ENCODE measurements at regions of chr16 and their contacts with region 1.

Region 1: DNA sequence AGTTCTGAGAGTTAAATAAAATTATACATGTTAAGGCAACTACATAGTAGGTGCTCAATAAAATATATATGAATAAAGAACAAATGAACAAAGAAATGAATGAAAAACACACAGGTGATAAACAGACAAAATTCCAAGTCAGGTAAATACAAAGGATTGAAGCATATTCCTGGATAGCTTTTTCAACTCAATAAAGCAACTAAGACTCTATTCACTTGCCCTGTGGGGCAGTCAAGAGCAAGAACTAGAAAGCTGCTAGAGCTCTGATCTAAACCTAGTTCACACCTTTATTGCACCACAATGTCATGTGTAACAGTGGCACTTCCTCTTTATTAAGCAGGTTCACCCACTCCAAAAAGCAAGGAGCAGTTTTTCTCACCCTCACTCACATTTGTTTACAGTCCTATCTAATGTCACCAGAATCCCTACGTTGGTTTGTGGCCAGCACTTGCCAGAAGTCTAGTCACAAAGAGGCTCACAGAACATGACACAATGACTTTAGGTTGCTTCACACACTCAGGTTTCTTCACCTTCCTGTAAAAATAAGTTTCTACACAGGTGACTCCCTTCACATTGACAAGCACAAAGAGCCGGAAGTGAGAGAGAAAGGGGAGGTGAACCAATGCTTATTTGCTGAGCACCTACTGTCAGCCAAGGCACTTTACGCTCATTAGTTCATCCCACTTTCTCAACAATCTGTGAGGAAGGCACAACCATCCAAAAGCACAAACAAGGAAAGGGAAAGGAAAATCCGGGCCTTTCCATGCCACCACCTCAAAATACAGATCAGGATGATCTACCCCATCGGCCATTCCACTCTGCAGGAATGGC is 70.8 kb downstream of the XPO6 start:
- DNase-seq: peak; percentile 76
- H3K4me3 Mint-ChIP-seq: peak overlapping the region; percentile 71
- H3K27ac Mint-ChIP-seq: peak overlapping the region; percentile 90
- H3K4me1 Mint-ChIP-seq: peaks cover 79% of the 10 kb centered on the region
- H3K27me3 Mint-ChIP-seq: no peaks in the 10 kb centered on the region

Region 2: GRCh38 chr16:28166394-28167208 is 25.6 kb after region 1 on chr16:
- intact Hi-C with region 1: loop called (anchors 1 kb)
- DNase-seq: no peak
- H3K4me3 Mint-ChIP-seq: peak overlapping the region; percentile 1
- H3K27ac Mint-ChIP-seq: peak overlapping the region; percentile 32
- H3K4me1 Mint-ChIP-seq: peaks cover 68% of the 10 kb centered on the region
- H3K27me3 Mint-ChIP-seq: no peaks in the 10 kb centered on the region

Region 3: GRCh38 chr16:28187595-28188004 is 46.6 kb after region 1 on chr16:
- intact Hi-C with region 1: loop called (anchors 1 kb)
- DNase-seq: no peak
- H3K4me3 Mint-ChIP-seq: peak overlapping the region; percentile 54
- H3K27ac Mint-ChIP-seq: peak overlapping the region; percentile 88
- H3K4me1 Mint-ChIP-seq: peaks cover 93% of the 10 kb centered on the region
- H3K27me3 Mint-ChIP-seq: no peaks in the 10 kb centered on the region

Region 4: DNA sequence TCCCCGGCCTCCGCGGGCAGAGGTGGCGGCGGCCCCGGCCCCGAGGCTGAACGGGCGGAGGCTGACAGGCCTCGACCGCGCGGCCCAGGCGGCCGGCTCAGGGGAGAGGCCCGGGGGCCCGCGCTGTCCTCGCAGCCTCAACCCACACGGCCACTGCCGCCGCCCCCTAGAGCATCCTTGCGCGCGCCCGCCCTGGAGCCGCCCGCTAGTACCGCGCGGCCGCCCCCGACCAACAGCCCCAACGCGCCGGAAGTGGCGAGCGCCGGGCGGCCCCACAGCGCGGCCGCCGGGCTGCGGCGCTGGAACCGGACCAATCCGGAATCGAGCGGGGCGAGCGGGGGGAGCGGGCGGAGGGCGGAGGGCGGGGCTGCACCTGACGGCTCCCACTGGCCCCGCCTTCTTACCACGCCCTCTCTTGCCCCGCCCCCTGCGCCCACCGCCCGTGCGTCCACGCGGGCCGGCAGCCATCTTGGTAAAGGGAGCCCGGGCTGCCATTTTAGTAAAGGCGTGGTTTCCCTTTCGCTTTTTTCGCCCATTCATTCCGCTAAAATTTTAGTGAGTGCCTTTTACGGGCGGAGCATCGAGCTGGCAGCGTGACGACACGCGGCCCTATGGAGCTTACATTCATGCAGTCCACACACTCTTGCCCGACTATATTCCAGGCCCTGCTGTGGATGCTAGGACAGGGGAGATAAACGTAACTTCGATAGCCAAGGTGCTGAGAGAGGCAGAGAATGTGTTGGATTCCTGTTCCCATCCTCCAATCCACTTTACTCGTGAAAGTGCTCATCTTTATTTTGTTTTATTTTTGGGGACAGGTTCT is 70.9 kb after region 1 on chr16 and contains the start of gene XPO6:
- intact Hi-C with region 1: loop called (anchors 1 kb)
- DNase-seq: peak; percentile 97
- H3K4me3 Mint-ChIP-seq: peak within 1 kb of the TSS; percentile 92
- H3K27ac Mint-ChIP-seq: peak within 1 kb of the TSS; percentile 96
- H3K4me1 Mint-ChIP-seq: peaks cover 36% of the 10 kb centered on the region
- H3K27me3 Mint-ChIP-seq: no peaks in the 10 kb centered on the region
- total RNA-seq, gene XPO6: 213 and 225 TPM in 2 replicates

Region 5: GRCh38 chr16:28277537-28278388 is 136.8 kb after region 1 on chr16:
- intact Hi-C with region 1: no loop called
- DNase-seq: peak; percentile 76
- H3K4me3 Mint-ChIP-seq: peak overlapping the region; percentile 72
- H3K27ac Mint-ChIP-seq: no peak overlapping the region
- H3K4me1 Mint-ChIP-seq: peaks cover 34% of the 10 kb centered on the region
- H3K27me3 Mint-ChIP-seq: peaks cover 19% of the 10 kb centered on the region

Region 6: GRCh38 chr16:28317040-28317880 is 176.3 kb after region 1 on chr16:
- intact Hi-C with region 1: loop called (anchors 1 kb)
- DNase-seq: peak; percentile 50
- H3K4me3 Mint-ChIP-seq: no peak overlapping the region
- H3K27ac Mint-ChIP-seq: peak overlapping the region; percentile 18
- H3K4me1 Mint-ChIP-seq: peaks cover 6% of the 10 kb centered on the region
- H3K27me3 Mint-ChIP-seq: no peaks in the 10 kb centered on the region

Measured in activated T-helper 1 cell treated with anti-CD3 and anti-CD28 coated beads, Interleukin-12 subunit alpha, Interleukin-12 subunit beta, Interleukin-2, Interleukin-4 antibody, amounts not matched to agents 30 ng/mL and 10 ng/mL and 1 ng/mL, durations not matched to agents 14 hours and 24 hours and 36 hours (primary cell).